GM18951 (cell line): ENCODE measurements at regions of chr3 and their contacts with region 1.

Region 1: DNA sequence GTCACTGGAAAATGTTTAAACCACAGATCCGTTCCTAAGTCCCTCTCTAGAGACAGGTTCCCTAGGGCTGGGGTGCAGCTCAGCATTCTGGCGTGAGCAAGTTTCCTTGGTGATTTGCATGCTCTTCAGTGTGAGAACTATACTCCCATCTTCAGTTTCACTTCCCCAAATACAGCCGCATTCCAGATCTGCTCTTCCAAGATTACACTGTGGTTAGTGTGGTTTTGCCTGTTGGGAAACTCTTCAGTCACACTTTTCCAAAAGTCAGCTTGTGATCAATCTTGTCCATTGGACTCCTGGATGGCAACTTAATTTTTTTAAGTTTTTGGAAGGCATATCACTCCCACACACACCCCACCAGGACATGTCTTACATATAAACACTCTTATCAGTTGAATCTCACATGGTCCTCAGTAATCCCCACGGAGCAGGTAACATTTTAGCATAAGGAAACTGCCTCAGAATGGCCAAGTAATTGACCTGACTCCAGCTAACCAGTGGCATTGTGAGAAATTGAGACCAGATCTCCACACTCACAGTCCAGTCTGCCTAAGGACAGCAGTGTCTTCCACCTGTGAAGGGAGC is 33.5 kb upstream of the PTPN23 start:
- POLR2A ChIP-seq: no peak

Region 2: DNA sequence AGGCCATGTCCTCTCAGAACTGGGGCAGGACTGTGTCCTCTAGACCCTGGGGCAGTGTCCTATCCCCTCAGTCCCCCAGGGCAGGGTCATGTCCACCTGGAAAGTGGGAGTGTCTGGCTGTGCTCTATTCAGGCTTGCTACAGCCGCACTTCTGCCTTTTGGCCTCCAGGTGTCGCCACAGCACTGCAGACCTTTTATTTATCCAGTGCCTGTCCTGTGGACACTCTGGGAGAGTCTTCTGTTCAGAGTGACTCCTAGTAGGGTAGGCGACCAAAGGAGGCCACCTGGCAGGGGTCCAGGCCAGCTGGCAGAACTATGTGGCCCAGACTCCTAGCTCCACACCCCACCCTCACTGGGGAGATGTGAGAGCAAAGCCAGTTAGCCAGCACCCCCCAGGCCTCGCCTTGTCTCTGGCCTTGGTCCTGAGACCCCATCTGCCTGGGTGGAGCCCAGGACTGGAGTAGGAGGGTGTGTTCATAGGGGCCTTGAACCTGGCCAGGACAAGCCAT is 642.2 kb before region 1 on chr3:
- in situ Hi-C with region 1: loop called (anchors 25 kb)
- POLR2A ChIP-seq: no peak

Region 3: DNA sequence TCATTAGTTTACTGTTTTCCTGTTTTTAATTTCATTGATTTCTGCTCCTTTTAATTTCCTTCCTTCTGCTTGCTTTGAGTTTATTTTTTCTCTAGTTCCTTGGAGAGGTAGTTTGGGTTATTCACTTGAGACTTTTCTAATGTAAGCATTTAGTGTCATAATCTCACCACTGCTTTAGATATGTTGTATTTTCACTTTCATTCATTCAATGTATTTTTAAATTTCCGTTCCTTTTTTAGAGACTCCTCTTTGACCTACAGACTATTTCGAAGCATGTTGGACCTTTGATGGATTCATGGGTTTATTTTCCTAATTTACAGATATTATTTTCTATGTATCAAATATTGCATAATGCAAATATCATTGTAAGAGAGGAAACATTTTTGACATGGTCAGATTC is 41.3 kb before region 1 on chr3:
- in situ Hi-C with region 1: no loop called
- POLR2A ChIP-seq: no peak

Region 4: GRCh38 chr3:47536221-47536891 is 189.0 kb after region 1 on chr3:
- in situ Hi-C with region 1: no loop called
- POLR2A ChIP-seq: no peak

Region 5: DNA sequence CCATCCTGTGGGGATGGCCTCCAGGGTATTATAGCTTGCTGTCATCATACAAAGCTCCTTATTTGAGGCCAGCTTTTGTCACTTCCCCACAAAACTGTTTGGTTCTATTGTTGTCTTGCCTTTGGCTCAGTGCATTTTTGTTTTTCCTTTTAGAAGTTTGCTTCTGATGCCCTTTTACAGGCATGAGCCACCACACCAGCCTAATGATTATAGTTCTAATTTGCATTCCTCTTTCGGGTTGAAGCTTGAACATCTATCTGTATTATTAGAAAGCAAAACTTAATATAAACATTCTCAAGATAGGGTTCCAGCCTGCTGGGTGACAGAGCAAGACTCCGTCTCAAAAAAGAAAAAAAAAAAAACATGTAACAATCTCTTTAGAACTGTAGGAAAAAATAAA is 394.6 kb after region 1 on chr3:
- in situ Hi-C with region 1: no loop called
- POLR2A ChIP-seq: no peak